ENCODE measurements at regions of chr15 and their contacts with region 1.

Region 1: DNA sequence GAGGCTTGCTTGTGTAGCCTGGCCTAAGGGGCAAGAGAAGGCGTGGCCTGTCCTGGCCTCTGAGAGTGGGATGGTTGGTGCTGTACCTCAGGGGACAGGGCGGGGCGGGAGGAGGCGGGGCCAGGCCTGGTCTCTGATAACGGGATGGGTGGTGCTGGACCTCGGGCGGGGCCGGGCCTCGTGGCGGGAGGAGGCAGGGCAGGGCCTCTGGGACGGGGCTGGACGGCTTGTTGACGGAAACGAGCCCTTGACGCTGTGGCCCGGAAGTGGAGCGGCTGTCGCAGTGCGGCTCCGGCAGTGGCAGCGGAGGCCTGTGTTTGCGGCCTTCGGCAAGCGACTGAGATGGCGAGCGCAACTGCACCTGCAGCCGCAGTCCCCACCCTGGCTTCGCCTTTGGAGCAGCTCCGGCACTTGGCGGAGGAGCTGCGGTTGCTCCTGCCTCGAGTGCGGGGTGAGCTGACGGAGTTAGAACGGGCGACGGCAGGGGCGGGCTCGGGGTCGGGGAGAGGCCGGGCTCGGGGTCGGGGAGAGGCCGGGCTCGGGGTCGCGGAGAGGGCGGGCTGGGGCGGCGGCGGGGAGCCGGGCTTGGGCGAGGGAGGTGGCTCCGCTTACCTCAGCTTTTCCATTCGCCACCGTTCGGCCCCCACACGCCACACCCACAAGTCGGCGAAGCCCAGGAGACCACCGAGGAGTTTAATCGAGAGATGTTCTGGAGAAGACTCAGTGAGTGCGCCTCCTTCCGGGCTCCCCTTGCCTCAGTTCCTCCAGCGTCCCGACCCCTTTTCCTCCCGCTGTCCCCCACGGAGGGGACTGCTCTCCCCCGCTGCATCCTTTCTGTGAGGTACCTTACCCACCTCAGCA is at the start of gene CCNDBP1:
- DNase-seq: peak; percentile 94
- ATAC-seq: peak; percentile 96
- H3K4me3 Mint-ChIP-seq: peak within 1 kb of the TSS; percentile 90
- H3K27ac Mint-ChIP-seq: peak within 1 kb of the TSS; percentile 94
- H3K4me1 Mint-ChIP-seq: peaks cover 26% of the 10 kb centered on the region
- H3K27me3 Mint-ChIP-seq: no peaks in the 10 kb centered on the region
- total RNA-seq, gene CCNDBP1: 45.8 to 51.6 TPM

Region 2: DNA sequence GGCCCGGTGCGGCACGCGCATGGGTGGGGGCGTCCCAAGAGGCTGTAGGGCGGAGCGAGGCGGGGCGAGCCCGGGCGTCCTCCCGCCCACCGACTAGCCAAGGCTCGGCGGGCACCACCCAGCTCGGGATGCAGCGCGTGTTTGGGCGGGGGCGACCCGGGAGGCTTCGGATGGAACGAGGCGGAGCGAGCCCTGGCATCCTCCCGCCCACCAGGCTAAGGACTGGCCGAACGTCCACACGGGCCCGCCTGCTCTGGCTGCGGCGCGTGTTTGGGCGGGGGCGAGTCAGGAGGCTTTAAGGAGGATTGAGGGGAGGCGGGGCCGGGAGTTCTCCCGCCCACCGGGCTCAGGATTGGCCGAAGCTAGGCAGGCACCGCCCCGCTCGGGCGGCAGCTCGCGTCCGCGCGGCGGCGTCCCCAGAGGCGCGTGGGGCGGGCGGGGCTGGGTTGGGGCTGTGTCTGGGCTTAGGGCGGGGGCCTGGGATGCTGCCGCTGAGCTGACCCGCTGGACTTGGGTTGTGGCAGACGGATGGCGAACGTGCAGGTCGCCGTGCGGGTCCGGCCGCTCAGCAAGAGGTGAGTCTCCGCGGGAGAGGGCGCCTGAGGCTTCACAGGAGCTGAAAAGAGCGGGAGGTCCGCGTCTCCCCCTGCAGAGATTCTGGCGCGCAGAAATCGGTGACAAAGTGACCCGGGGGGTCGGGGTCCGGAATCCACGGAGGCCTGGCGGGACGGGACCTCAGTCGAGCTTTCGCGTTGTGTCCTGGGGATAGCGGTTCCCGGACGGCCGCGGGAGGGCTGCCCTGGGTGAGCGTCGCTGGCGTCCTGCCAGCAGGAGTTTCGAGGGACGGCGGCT is 610.0 kb before region 1 on chr15 and contains the start of gene STARD9:
- CTCF ChIA-PET with region 1: no interaction called
- POLR2A ChIA-PET with region 1: no interaction called
- intact Hi-C with region 1: loop called in 1 of 2 experiments (anchors 1 kb)
- DNase-seq: peak; percentile 97
- ATAC-seq: peak; percentile 92
- H3K4me3 Mint-ChIP-seq: peak within 1 kb of the TSS; percentile 86
- H3K27ac Mint-ChIP-seq: peak within 1 kb of the TSS; percentile 76
- H3K4me1 Mint-ChIP-seq: peaks cover 18% of the 10 kb centered on the region
- H3K27me3 Mint-ChIP-seq: peaks cover 21% of the 10 kb centered on the region
- total RNA-seq, gene STARD9: 4.0 to 4.1 TPM

Region 3: GRCh38 chr15:43048935-43049334 is 136.5 kb before region 1 on chr15:
- CTCF ChIA-PET with region 1: no interaction called
- POLR2A ChIA-PET with region 1: no interaction called
- intact Hi-C with region 1: no loop called
- DNase-seq: no peak
- ATAC-seq: no peak
- H3K4me3 Mint-ChIP-seq: no peak overlapping the region
- H3K27ac Mint-ChIP-seq: no peak overlapping the region
- H3K4me1 Mint-ChIP-seq: no peaks in the 10 kb centered on the region
- H3K27me3 Mint-ChIP-seq: no peaks in the 10 kb centered on the region

Region 4: GRCh38 chr15:43105778-43106485 is 79.5 kb before region 1 on chr15 and contains the start of gene UBR1:
- CTCF ChIA-PET with region 1: interaction called, 3 read pairs
- POLR2A ChIA-PET with region 1: no interaction called
- intact Hi-C with region 1: loop called in 1 of 2 experiments (anchors 1 kb)
- DNase-seq: peak; percentile 95
- ATAC-seq: peak; percentile 94
- H3K4me3 Mint-ChIP-seq: peak within 1 kb of the TSS; percentile 93
- H3K27ac Mint-ChIP-seq: peak within 1 kb of the TSS; percentile 96
- H3K4me1 Mint-ChIP-seq: peaks cover 41% of the 10 kb centered on the region
- H3K27me3 Mint-ChIP-seq: no peaks in the 10 kb centered on the region
- total RNA-seq, gene UBR1: 26.8 to 30.6 TPM

Region 5: GRCh38 chr15:43204016-43204901 is 18.9 kb after region 1 on chr15:
- CTCF ChIA-PET with region 1: interaction called, 10 read pairs
- POLR2A ChIA-PET with region 1: no interaction called
- intact Hi-C with region 1: loop called in 1 of 2 experiments (anchors 1 kb)
- DNase-seq: peak; percentile 77
- ATAC-seq: peak; percentile 72
- H3K4me3 Mint-ChIP-seq: no peak overlapping the region
- H3K27ac Mint-ChIP-seq: no peak overlapping the region
- H3K4me1 Mint-ChIP-seq: peaks cover 7% of the 10 kb centered on the region
- H3K27me3 Mint-ChIP-seq: peaks cover 2% of the 10 kb centered on the region

Region 6: GRCh38 chr15:43370975-43371974 is 185.9 kb after region 1 on chr15 and contains the starts of genes TUBGCP4 and ZSCAN29:
- CTCF ChIA-PET with region 1: interaction called, 3 read pairs
- POLR2A ChIA-PET with region 1: no interaction called
- intact Hi-C with region 1: loop called in 1 of 2 experiments (anchors 1 kb)
- DNase-seq: peak; percentile 87
- ATAC-seq: peak; percentile 86
- H3K4me3 Mint-ChIP-seq: peak within 1 kb of the TSS; percentile 86
- H3K27ac Mint-ChIP-seq: peak within 1 kb of the TSS; percentile 85
- H3K4me1 Mint-ChIP-seq: peaks cover 46% of the 10 kb centered on the region
- H3K27me3 Mint-ChIP-seq: no peaks in the 10 kb centered on the region
- total RNA-seq, gene TUBGCP4: 43.6 to 44.0 TPM
- total RNA-seq, gene ZSCAN29: 20.8 to 26.4 TPM

Region 7: DNA sequence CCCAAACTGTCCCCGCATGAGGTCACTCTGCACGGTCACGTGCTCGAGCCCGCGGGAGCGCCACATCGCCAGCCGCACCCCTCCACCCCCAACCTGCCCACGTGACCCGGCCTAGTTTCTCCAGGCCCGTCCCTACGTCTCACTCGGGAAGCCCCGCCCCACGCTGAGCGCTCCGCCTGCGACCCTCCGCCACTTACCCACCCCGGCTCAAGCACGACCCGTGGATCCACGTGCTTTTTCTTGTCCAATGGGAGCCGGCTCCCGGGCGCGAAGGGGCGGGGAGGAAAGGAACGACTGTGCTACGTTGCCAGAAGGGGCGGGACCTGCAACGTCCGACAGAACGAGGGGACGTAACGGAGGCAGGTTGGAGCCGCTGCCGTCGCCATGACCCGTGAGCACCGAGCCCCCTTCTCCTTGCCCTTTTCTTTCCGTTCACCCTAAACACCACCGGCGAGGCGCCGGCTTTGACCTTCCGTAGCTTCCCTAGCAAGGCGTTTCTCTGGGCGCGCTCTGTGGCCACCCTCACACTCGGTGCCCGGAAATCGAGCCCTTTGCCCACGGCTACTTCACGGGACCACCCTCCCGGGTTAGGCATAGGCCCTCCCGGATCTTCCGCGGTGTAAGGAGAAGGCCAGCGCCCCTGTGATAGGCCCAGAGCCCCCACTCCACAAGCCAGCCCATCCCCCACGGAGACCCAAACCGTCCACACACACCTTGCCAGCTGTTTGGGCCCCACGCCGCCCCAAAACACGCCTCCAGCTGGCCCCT is 606.8 kb after region 1 on chr15 and contains the start of gene SERF2:
- CTCF ChIA-PET with region 1: no interaction called
- POLR2A ChIA-PET with region 1: no interaction called
- intact Hi-C with region 1: loop called in 1 of 2 experiments (anchors 1 kb)
- DNase-seq: peak; percentile 100
- ATAC-seq: peak; percentile 98
- H3K4me3 Mint-ChIP-seq: peak within 1 kb of the TSS; percentile 97
- H3K27ac Mint-ChIP-seq: peak within 1 kb of the TSS; percentile 97
- H3K4me1 Mint-ChIP-seq: peaks cover 35% of the 10 kb centered on the region
- H3K27me3 Mint-ChIP-seq: no peaks in the 10 kb centered on the region
- total RNA-seq, gene SERF2: 710 to 718 TPM